AG04449 (cell line): ENCODE measurements at regions of chr2 and their contacts with region 1.

Region 1: GRCh38 chr2:84946204-84947009 is 24.6 kb upstream of the KCMF1 start:
- DNase-seq: no peak
- H3K4me3 ChIP-seq: no peak overlapping the region
- CTCF ChIP-seq: no peak

Region 2: DNA sequence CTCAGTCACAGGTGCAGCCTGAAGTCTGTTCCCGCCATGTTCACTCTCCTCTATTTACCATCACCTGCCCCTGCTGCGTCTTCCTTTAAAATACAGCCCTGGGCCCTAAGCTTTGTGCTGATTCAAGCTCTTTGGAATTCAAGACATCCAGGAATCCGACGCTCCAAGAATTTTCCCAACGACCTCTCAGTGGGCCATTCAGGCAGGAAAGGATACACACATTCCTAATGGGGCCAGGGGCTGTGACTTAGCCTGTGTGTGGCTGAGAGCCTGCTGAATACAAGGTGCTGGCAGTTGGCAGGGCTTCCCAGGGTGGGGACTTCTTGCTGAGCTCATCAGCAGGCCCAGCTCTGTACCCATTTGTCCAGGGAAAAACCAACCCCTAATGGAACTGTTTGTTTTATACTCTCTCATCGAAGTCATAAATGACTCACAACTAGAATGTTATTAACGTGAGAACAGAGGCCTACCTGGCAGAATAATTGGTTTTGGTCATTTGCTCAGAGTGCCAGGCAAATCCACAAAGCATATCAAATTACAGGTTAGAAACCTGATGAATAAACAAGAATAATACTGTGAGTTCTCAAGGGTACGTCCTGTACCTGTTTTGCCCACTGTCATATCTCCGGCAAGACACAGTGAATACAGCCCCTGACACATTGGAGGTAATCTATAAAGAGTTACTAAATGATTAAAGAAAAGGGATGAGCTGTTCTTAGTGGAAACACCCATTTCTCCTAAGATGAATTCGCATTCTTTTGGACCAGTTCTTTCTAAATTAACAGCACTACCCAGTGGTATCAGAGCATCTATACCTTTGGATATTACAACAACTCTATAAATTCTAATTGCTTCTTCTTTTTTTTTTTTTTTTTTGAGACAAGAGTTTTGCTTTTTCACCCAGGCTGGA is 12.0 kb after region 1 on chr2:
- CTCF ChIA-PET with region 1: interaction called, 12 read pairs
- POLR2A ChIA-PET with region 1: interaction called, 27 read pairs
- DNase-seq: peak; percentile 81
- H3K4me3 ChIP-seq: no peak overlapping the region
- CTCF ChIP-seq: no peak

Region 3: GRCh38 chr2:85162746-85163301 is 216.4 kb after region 1 on chr2:
- CTCF ChIA-PET with region 1: no interaction called
- POLR2A ChIA-PET with region 1: no interaction called
- DNase-seq: no peak
- H3K4me3 ChIP-seq: no peak overlapping the region
- CTCF ChIP-seq: no peak